ENCODE measurements at regions of chr13 and their contacts with region 1.

Region 1: GRCh38 chr13:31044377-31045285 is 112.2 kb downstream of the TEX26 start:
- DNase-seq: peak; percentile 78
- H3K4me3 Mint-ChIP-seq: peak overlapping the region; percentile 7
- H3K27ac Mint-ChIP-seq: peak overlapping the region; percentile 86
- H3K4me1 Mint-ChIP-seq: peaks cover 45% of the 10 kb centered on the region
- H3K27me3 Mint-ChIP-seq: no peaks in the 10 kb centered on the region

Region 2: GRCh38 chr13:30408319-30409101 is 636.1 kb before region 1 on chr13:
- intact Hi-C with region 1: loop called (anchors 10 kb)
- DNase-seq: peak; percentile 89
- H3K4me3 Mint-ChIP-seq: no peak overlapping the region
- H3K27ac Mint-ChIP-seq: peak overlapping the region; percentile 40
- H3K4me1 Mint-ChIP-seq: peaks cover 21% of the 10 kb centered on the region
- H3K27me3 Mint-ChIP-seq: no peaks in the 10 kb centered on the region

Region 3: GRCh38 chr13:30510811-30511371 is 533.7 kb before region 1 on chr13:
- intact Hi-C with region 1: no loop called
- DNase-seq: no peak
- H3K4me3 Mint-ChIP-seq: no peak overlapping the region
- H3K27ac Mint-ChIP-seq: no peak overlapping the region
- H3K4me1 Mint-ChIP-seq: peaks cover 12% of the 10 kb centered on the region
- H3K27me3 Mint-ChIP-seq: peaks cover 20% of the 10 kb centered on the region

Region 4: DNA sequence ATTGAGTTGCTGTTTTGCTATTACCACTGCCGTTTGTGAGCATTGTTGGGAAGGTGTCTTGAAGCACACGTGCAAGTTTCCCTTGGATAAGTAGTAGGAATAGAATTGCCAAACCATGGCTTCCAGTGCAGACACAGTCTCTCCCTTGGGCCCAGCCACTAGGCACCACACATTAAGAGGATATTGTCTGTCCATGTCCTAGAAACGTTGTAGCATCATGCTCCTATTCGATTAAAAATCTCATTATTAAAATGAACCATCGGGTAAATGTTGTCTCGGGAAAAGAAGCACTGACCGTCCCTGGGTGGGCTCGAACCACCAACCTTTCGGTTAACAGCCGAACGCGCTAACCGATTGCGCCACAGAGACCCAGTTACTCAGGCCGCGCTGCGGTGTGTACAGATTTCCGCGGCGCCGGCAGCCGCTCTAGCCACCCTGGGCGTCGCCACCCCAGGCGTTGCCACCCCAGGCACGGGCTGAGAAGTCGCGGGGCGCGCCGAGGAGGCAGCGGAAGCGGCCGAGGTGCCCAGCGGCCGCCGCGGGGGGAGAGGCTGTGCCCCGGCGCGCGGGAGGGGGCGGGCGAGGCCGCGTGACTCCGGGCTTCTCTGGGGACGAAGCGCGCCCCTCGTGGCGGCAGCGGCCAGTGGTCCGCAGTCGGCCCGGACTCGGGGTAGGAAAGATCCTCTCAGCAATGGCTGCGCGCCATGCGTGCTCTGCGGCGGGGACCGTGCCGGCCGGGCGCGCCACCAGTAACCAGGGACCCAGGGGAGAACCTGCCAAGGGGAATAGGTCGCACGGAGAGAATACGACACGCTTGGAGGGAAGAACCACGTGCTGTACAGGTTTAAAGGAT is 370.7 kb before region 1 on chr13:
- intact Hi-C with region 1: loop called (anchors 5 kb)
- DNase-seq: peak; percentile 85
- H3K4me3 Mint-ChIP-seq: peak overlapping the region; percentile 86
- H3K27ac Mint-ChIP-seq: peak overlapping the region; percentile 73
- H3K4me1 Mint-ChIP-seq: peaks cover 18% of the 10 kb centered on the region
- H3K27me3 Mint-ChIP-seq: peaks cover 29% of the 10 kb centered on the region

Region 5: DNA sequence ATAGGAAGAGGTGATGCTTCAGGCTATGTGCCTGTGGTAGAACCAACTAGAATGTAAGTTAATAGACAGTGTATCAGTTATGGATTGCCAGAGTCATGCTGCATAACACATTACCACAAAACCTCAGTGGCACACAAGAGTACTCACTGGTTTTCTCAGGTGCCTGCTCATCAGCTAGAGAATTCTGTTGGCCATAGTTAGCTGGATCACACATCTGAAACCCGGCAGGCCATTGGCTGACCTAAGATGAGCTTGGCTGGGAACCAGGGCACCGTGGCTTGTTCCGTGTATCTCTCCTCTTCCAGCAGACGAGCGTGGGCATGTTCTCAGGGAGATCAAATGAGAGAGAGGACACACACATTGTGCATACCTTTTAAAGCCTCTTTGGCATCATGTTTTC is 35.5 kb before region 1 on chr13:
- intact Hi-C with region 1: loop called (anchors 2 kb)
- DNase-seq: no peak
- H3K4me3 Mint-ChIP-seq: no peak overlapping the region
- H3K27ac Mint-ChIP-seq: no peak overlapping the region
- H3K4me1 Mint-ChIP-seq: peaks cover 21% of the 10 kb centered on the region
- H3K27me3 Mint-ChIP-seq: peaks cover 34% of the 10 kb centered on the region

Region 6: GRCh38 chr13:31131470-31131961 is 86.9 kb after region 1 on chr13:
- intact Hi-C with region 1: loop called (anchors 5 kb)
- DNase-seq: no peak
- H3K4me3 Mint-ChIP-seq: no peak overlapping the region
- H3K27ac Mint-ChIP-seq: peak overlapping the region; percentile 34
- H3K4me1 Mint-ChIP-seq: peaks cover 34% of the 10 kb centered on the region
- H3K27me3 Mint-ChIP-seq: peaks cover 9% of the 10 kb centered on the region

Region 7: DNA sequence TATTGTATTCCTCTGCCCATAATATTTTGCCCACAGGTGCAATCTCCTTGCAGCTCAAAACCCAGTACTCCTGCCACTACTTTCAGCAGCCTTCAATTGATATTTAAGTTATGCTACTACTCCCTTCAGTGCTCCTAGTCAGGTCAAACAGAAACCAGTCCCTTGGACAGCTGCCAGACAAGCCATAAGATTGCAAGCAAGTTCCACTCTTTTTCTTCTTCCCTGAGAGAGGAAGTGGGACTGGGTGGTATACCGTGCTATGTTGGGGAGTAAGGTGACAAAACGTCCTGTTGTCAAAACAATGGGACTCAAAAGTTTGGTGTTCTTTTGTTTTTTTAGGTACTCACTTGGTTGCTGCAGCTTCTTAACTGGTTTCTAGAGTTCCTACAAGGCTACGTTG is 923.8 kb after region 1 on chr13:
- intact Hi-C with region 1: no loop called
- DNase-seq: no peak
- H3K4me3 Mint-ChIP-seq: no peak overlapping the region
- H3K27ac Mint-ChIP-seq: no peak overlapping the region
- H3K4me1 Mint-ChIP-seq: no peaks in the 10 kb centered on the region
- H3K27me3 Mint-ChIP-seq: peaks cover 43% of the 10 kb centered on the region